ENCODE measurements at regions of chr20 and their contacts with region 1.

Region 1: GRCh38 chr20:44747166-44748004 is 1.7 kb downstream of the KCNK15 start:
- DNase-seq: peak; percentile 64 to 96 (median 85)

Region 2: DNA sequence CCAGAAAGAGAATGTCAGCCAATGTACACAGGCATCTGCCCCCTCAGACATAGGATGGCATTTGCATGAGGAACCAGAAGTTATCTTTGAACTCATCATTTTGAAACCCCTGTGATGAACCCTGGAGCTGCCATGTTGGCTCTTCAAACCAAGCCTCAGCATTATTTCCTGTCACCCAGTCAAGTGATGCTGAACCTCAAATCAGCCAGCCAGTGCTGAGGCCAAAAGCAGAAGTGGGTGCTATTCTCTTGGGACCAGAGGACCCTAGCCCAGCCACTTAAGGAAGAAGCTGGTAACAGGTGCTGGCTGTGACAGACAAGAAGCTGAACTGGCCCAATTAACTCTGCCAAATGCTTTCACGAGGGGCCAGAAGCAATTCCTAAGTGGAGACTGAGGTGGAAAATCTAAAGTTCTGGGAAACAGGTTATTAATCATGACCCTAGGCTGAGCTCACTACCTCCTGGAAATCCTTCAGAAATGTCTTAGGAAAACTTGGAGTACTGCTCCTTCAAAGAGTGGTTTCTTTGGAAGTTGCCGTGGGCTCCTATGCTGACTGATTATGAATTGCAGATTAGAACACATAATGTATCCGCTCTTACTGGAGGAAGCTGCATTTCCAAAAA is 161.0 kb before region 1 on chr20:
- intact Hi-C with region 1: no loop called
- DNase-seq: no peak

Region 3: GRCh38 chr20:44810391-44811149 is 63.2 kb after region 1 on chr20 and contains the start of gene RIMS4:
- intact Hi-C with region 1: loop called (anchors 5 kb)
- DNase-seq: peak in 3 of 10 donors; percentile 78 to 87 (median 86)

Region 4: DNA sequence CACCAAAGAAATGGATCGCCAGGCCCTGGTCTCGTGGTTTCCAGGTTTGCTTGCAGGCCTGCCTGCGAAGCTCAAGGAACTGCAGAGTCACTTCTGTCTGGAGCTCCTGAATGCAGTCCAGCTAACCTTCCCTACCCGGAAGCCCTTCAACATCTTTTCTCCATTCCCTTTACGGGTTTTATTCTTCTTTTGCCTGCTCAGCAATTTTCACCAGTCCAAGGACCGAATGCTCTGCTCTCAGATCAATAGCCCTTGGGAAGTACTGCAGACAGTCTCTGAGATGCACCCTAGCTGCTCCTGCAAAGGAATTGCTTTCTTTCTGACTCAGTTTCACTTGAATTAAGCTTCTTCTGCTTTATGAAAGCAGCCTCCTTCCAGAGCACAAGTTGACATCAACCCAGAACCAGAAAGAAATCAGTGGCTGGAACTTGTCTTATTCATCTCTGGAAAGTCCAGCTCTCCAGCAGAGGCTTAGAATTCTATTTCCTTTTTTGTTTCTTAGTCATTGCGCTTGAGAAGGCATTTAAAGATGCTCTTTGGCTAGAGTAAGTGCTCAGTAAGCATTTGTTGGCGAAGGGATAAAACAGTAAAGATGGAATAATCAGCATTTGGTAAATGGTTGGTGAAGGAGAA is 119.4 kb after region 1 on chr20:
- intact Hi-C with region 1: loop called (anchors 2 kb)
- DNase-seq: no peak

Region 5: GRCh38 chr20:44928595-44928994 is 181.2 kb after region 1 on chr20:
- intact Hi-C with region 1: no loop called
- DNase-seq: peak in 1 of 10 donors; percentile 21